ENCODE measurements at regions of chr3 and their contacts with region 1.

Region 1: DNA sequence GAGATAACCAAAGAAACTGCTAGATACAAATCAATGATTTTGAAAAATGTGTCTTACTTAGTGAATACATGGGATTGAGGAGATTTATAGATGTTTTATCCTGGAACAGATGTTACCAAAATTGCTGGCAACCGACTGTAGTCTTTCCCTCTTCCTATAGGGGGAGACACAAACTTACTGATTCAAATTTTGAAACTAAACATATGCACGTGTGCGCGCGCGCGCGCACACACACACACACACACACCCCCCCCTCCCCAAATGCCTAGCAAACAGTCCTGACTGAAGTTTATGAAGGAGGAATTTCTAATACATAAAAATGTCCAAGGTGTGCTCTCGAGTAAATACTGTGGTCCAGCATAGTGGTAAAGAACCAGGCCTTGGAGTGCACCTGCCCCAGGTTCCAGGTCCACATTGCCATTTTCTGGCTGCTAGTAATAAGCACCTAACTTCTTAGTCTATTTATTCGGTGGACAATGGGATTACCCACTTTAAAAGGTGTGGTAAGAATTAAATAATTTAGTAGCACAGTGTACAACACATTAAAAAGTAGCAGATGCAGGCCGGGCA is 18.5 kb upstream of the C3orf62 start:
- H3K4me3 Mint-ChIP-seq: no peak overlapping the region
- H3K27ac Mint-ChIP-seq: no peak overlapping the region
- H3K4me1 Mint-ChIP-seq: peaks cover 21% of the 10 kb centered on the region
- H3K27me3 Mint-ChIP-seq: no peaks in the 10 kb centered on the region

Region 2: DNA sequence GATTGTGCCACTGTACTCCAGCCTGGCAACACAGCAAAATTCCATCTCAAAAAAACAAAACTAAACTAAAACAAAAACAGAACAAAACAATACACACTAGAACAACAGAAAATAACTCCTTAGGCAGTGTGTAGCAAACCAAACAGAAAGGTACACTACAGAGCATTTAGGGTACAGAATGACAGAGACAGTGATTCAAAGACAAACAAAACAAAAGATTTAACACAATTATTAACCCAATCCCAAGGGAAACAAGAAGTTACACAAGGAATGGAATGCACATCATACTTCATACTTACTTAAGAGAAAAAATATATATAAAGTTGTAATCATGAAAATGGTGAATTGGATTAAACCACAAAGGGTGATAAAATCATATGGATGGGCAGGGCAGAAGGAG is 409.8 kb before region 1 on chr3:
- intact Hi-C with region 1: no loop called
- H3K4me3 Mint-ChIP-seq: no peak overlapping the region
- H3K27ac Mint-ChIP-seq: no peak overlapping the region
- H3K4me1 Mint-ChIP-seq: peaks cover 8% of the 10 kb centered on the region
- H3K27me3 Mint-ChIP-seq: no peaks in the 10 kb centered on the region

Region 3: DNA sequence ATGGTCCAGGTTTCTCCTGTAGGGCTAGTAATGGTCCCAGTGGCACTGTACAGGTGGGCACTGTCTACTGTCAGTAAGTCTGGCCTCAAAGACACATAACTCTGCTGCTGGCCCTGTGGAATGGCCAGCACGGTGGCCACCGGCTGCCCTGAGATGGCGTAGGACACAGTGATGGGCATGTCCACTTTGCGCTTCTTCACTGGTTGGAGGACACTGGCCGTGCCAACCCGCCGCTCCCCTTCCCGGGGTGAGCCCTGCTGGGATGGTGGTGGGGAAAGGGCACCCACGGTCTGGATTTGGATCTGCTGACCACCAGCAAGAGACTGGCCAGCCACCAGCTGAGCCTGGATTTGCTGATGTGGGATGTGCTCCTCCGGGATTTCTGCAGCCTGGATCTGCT is 238.3 kb before region 1 on chr3:
- intact Hi-C with region 1: no loop called
- H3K4me3 Mint-ChIP-seq: no peak overlapping the region
- H3K27ac Mint-ChIP-seq: no peak overlapping the region
- H3K4me1 Mint-ChIP-seq: no peaks in the 10 kb centered on the region
- H3K27me3 Mint-ChIP-seq: no peaks in the 10 kb centered on the region

Region 4: DNA sequence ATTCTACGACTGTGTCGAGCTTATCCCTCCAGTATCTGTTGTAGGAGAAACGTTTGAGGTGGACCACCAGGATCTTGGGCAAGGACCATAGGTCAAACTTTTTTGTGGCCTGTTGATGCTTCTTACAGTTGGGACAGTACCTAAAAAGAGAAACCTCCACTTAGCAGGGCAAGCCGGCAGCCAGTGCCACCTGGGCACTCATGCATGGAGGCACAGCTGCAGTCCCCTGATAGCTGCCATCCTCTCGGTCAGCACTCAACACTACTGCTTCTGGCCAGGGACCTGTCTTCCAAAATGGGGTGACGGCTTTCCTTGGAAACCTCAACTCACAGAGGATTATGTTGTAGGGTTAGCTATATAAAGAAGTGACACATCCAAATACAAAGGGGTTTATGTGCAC is 11.6 kb before region 1 on chr3:
- intact Hi-C with region 1: no loop called
- H3K4me3 Mint-ChIP-seq: no peak overlapping the region
- H3K27ac Mint-ChIP-seq: no peak overlapping the region
- H3K4me1 Mint-ChIP-seq: no peaks in the 10 kb centered on the region
- H3K27me3 Mint-ChIP-seq: no peaks in the 10 kb centered on the region

Region 5: GRCh38 chr3:49428697-49429100 is 133.1 kb after region 1 on chr3:
- intact Hi-C with region 1: no loop called
- H3K4me3 Mint-ChIP-seq: peak overlapping the region; percentile 91
- H3K27ac Mint-ChIP-seq: peak overlapping the region; percentile 99
- H3K4me1 Mint-ChIP-seq: peaks cover 11% of the 10 kb centered on the region
- H3K27me3 Mint-ChIP-seq: no peaks in the 10 kb centered on the region

Region 6: DNA sequence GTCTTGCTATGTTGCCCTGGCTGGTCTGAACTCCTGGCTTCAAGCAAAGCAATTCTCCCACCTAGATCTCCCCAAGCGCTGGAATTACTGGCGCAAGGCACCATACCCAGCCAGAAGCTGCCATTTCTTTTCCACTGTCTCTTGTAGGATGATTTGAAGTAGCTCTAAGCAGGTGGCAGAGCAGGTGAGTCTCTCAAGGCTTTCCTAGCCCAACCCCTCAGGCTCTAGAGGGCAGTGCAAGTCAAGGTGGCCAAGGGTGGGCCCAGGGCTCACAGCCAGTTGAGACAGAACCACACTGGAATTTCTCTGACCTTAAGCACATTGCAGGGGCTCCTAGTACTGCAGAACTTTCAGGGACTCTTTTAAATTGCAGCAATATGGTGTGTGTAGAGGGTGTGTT is 158.9 kb after region 1 on chr3:
- intact Hi-C with region 1: loop called (anchors 1 kb)
- H3K4me3 Mint-ChIP-seq: no peak overlapping the region
- H3K27ac Mint-ChIP-seq: no peak overlapping the region
- H3K4me1 Mint-ChIP-seq: no peaks in the 10 kb centered on the region
- H3K27me3 Mint-ChIP-seq: peaks cover 6% of the 10 kb centered on the region

Measured in dendritic cell treated with granulocyte-macrophage colony-stimulating factor and Interleukin-4, amounts not matched to agents 40 ng/mL and 50 ng/mL, for 4 days (primary cell).